ENCODE measurements at regions of chr11 and their contacts with region 1.

Region 1: GRCh38 chr11:72591785-72592490 is 82.3 kb downstream of the PDE2A start:
- DNase-seq: peak; percentile 69
- ATAC-seq: peak; percentile 87
- H3K4me3 ChIP-seq: no peak overlapping the region
- H3K4me3 Mint-ChIP-seq: peak overlapping the region; percentile 85
- H3K27ac ChIP-seq: no peak overlapping the region
- H3K27ac Mint-ChIP-seq: peak overlapping the region; percentile 72
- H3K4me1 ChIP-seq: peaks cover 30% of the 10 kb centered on the region in 2 donors
- H3K4me1 Mint-ChIP-seq: peaks cover 38% of the 10 kb centered on the region
- H3K27me3 ChIP-seq: peaks cover 0 to 54% (median 22%) of the 10 kb centered on the region in 4 experiments
- H3K27me3 Mint-ChIP-seq: peaks cover 47% of the 10 kb centered on the region
- CTCF ChIP-seq: no peak

Region 2: DNA sequence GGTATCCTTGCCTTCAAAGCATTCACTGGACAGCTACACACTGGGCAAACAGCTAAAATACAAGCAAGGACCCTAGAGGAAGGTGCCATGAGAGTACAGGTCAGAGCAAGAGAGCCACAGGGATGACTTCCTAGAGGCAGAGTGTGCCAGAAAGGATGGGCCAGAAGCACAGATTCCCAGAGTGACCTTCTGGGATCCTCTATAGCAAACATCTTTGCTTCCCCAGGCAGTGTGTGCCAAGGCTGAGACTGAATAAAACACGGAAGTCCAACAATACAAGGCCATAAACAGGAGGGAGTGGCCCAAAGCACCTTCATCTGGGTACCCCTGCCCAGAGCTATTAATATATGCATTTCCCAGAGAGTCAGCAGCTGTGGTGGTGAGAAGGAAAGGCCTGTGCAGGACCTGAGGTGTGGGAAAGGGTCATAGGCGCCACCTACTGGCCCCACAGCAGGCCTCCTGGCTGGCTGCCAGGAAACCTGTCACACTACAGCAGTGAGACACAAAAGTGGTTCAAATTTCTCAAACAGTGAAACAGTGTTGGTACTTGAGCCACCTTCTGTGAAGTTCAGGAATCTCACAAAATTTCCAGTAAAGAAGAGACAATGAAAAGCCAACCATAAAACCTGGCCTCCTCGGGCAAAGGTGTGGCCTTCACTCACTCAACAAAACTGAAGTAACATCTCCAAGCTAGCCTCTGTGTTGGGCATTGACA is 177.9 kb before region 1 on chr11:
- CTCF ChIA-PET with region 1: no interaction called
- POLR2A ChIA-PET with region 1: no interaction called
- intact Hi-C with region 1: no loop called
- DNase-seq: peak; percentile 81
- ATAC-seq: no peak
- H3K4me3 ChIP-seq: no peak overlapping the region
- H3K4me3 Mint-ChIP-seq: no peak overlapping the region
- H3K27ac ChIP-seq: no peak overlapping the region
- H3K27ac Mint-ChIP-seq: peak overlapping the region; percentile 60
- H3K4me1 ChIP-seq: peaks cover 12 to 27% of the 10 kb centered on the region in 2 donors
- H3K4me1 Mint-ChIP-seq: peaks cover 43% of the 10 kb centered on the region
- H3K27me3 ChIP-seq: no peaks in the 10 kb centered on the region
- H3K27me3 Mint-ChIP-seq: no peaks in the 10 kb centered on the region
- CTCF ChIP-seq: peak; percentile 81

Region 3: GRCh38 chr11:72573072-72573854 is 18.7 kb before region 1 on chr11:
- CTCF ChIA-PET with region 1: no interaction called
- POLR2A ChIA-PET with region 1: no interaction called
- intact Hi-C with region 1: no loop called
- DNase-seq: no peak
- ATAC-seq: peak; percentile 71
- H3K4me3 ChIP-seq: no peak overlapping the region
- H3K4me3 Mint-ChIP-seq: no peak overlapping the region
- H3K27ac ChIP-seq: no peak overlapping the region
- H3K27ac Mint-ChIP-seq: no peak overlapping the region
- H3K4me1 ChIP-seq: no peaks in the 10 kb centered on the region
- H3K4me1 Mint-ChIP-seq: peaks cover 5% of the 10 kb centered on the region
- H3K27me3 ChIP-seq: peaks cover 0 to 16% (median 6%) of the 10 kb centered on the region in 4 experiments
- H3K27me3 Mint-ChIP-seq: peaks cover 53% of the 10 kb centered on the region
- CTCF ChIP-seq: peak; percentile 45

Region 4: GRCh38 chr11:72609045-72609444 is 17.1 kb after region 1 on chr11:
- CTCF ChIA-PET with region 1: interaction called, 32 read pairs
- POLR2A ChIA-PET with region 1: no interaction called
- intact Hi-C with region 1: loop called (anchors 1 kb)
- DNase-seq: no peak
- ATAC-seq: no peak
- H3K4me3 ChIP-seq: no peak overlapping the region
- H3K4me3 Mint-ChIP-seq: no peak overlapping the region
- H3K27ac ChIP-seq: no peak overlapping the region
- H3K27ac Mint-ChIP-seq: no peak overlapping the region
- H3K4me1 ChIP-seq: peaks cover 11 to 14% of the 10 kb centered on the region in 2 donors
- H3K4me1 Mint-ChIP-seq: peaks cover 15% of the 10 kb centered on the region
- H3K27me3 ChIP-seq: peaks cover 0 to 50% (median 10%) of the 10 kb centered on the region in 4 experiments
- H3K27me3 Mint-ChIP-seq: peaks cover 33% of the 10 kb centered on the region
- CTCF ChIP-seq: peak; percentile 70

Region 5: DNA sequence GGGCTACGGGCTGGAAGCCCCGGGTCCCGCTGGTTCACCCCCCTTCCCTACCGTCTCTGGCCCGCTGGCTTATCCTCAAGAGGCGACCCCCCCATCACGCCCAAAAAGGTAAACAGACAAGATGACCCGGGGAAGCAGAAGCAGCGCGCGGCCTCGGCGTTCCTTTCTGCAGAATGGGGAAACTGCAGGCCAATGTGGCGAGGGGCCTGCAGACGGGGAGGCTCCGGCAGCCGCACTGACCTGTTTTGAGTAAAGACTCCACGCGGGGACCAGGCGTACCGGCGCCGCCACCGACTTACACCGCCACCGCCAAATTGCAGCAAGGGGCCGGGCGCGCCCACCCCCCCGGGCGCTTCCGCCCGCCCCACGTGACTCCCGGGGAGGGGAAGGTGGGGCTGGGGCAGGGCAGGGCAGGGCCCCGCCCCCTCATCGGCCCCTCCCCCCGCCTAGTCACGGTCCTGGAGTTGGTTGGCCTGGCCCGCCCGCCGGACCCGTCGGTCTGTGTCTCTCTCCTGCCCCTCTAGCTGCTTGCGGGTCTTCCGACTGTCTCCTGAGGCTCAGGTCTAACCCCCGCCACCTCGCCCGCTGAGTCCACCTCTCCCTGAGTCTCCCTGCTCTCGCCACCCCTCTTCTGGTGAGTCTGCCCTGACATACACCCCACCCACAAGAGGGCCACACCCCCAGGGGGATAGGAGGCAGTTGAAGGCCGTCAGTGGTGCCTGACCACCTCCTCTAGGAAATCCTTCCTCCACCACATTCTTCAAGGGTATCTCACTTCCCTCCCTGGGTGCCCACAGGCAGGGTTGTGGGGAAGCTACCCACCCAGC is 160.4 kb after region 1 on chr11 and contains the start of gene ARAP1:
- CTCF ChIA-PET with region 1: no interaction called
- POLR2A ChIA-PET with region 1: no interaction called
- intact Hi-C with region 1: no loop called
- DNase-seq: peak; percentile 87
- ATAC-seq: peak; percentile 91
- H3K4me3 ChIP-seq: peak within 1 kb of the TSS; percentile 63 to 93 (median 82)
- H3K4me3 Mint-ChIP-seq: peak within 1 kb of the TSS; percentile 99
- H3K27ac ChIP-seq: peak within 1 kb of the TSS; percentile 65 to 79
- H3K27ac Mint-ChIP-seq: peak within 1 kb of the TSS; percentile 96
- H3K4me1 ChIP-seq: peaks cover 42 to 53% of the 10 kb centered on the region in 2 donors
- H3K4me1 Mint-ChIP-seq: peaks cover 45% of the 10 kb centered on the region
- H3K27me3 ChIP-seq: no peaks in the 10 kb centered on the region
- H3K27me3 Mint-ChIP-seq: no peaks in the 10 kb centered on the region
- CTCF ChIP-seq: peak; percentile 12
- total RNA-seq, gene ARAP1: 233 and 242 TPM in 2 replicates

Region 6: GRCh38 chr11:72840780-72841179 is 248.8 kb after region 1 on chr11:
- CTCF ChIA-PET with region 1: no interaction called
- POLR2A ChIA-PET with region 1: no interaction called
- intact Hi-C with region 1: no loop called
- DNase-seq: no peak
- ATAC-seq: no peak
- H3K4me3 ChIP-seq: no peak overlapping the region
- H3K4me3 Mint-ChIP-seq: no peak overlapping the region
- H3K27ac ChIP-seq: no peak overlapping the region
- H3K27ac Mint-ChIP-seq: peak overlapping the region; percentile 20
- H3K4me1 ChIP-seq: no peaks in the 10 kb centered on the region
- H3K4me1 Mint-ChIP-seq: no peaks in the 10 kb centered on the region
- H3K27me3 ChIP-seq: no peaks in the 10 kb centered on the region
- H3K27me3 Mint-ChIP-seq: no peaks in the 10 kb centered on the region
- CTCF ChIP-seq: no peak

Measured in B cell (primary cell).